ENCODE measurements at regions of chr6 and their contacts with region 1.

Region 1: GRCh38 chr6:107704347-107705013 is 119.6 kb downstream of the SCML4 start:
- DNase-seq: no peak
- ATAC-seq: peak in 2 of 4 donors; percentile 55 to 56
- H3K4me3 ChIP-seq: peak overlapping the region in 1 of 12 donors; percentile 19
- H3K27ac ChIP-seq: no peak overlapping the region
- H3K4me1 ChIP-seq: peaks cover 0 to 6% (median 0%) of the 10 kb centered on the region in 12 donors
- H3K27me3 ChIP-seq: no peaks in the 10 kb centered on the region
- CTCF ChIP-seq: peak; percentile 75 to 92 (median 84)
- POLR2A ChIP-seq: no peak

Region 2: GRCh38 chr6:107132330-107132954 is 572.0 kb before region 1 on chr6:
- intact Hi-C with region 1: loop called in 1 of 10 experiments (anchors 10 kb)
- DNase-seq: peak in 1 of 5 donors; percentile 30
- ATAC-seq: no peak
- H3K4me3 ChIP-seq: no peak overlapping the region
- H3K27ac ChIP-seq: no peak overlapping the region
- H3K4me1 ChIP-seq: peaks cover 0 to 10% (median 0%) of the 10 kb centered on the region in 12 donors
- H3K27me3 ChIP-seq: no peaks in the 10 kb centered on the region
- CTCF ChIP-seq: peak in 10 of 12 donors; percentile 15 to 55 (median 45)
- POLR2A ChIP-seq: no peak

Region 3: DNA sequence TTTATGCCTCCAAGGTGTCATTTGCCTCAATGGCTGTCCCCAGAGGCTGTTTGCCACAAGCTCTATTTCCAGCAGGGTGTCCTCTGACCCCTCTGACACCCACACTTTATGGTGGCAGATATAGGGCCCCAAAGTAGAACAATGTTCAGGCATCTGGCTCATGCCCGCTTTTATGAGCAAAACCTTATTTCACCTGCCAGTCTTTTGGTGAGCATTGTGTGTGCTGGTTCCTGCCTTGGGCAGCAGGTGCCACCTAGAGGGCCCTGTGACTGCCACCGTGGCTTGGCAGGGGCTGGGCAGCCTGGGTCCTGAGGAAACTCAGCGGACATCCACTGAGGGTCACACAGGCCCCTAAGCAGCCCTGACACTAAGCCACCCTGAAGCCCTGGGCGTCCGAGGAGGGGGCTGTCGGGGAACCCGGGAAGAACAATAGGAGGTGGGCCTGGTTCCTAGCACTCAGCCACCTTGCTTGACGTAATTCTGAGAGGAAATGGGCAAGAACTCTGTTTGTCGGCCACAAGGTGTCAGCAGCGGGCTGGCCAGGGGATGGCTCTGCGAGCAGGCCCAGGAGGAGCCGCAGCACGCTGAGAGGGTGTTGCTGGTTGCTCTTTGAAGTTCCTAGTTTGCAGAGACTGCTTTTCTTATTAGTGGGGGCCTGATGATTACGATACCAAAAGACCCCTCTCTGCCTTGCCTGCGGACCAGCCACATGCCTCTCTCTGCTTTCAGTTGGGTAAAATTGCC is 29.3 kb before region 1 on chr6:
- intact Hi-C with region 1: loop called in 2 of 10 experiments (anchors 1 to 2 kb)
- DNase-seq: peak; percentile 85 to 92 (median 87)
- ATAC-seq: peak; percentile 88 to 95 (median 94)
- H3K4me3 ChIP-seq: peak overlapping the region in 9 of 12 donors; percentile 7 to 46 (median 26)
- H3K27ac ChIP-seq: peak overlapping the region in 3 of 12 donors; percentile 16 to 57 (median 55)
- H3K4me1 ChIP-seq: peaks cover 0 to 32% (median 16%) of the 10 kb centered on the region in 12 donors
- H3K27me3 ChIP-seq: no peaks in the 10 kb centered on the region
- CTCF ChIP-seq: peak; percentile 83 to 95 (median 92)
- POLR2A ChIP-seq: no peak

Region 4: DNA sequence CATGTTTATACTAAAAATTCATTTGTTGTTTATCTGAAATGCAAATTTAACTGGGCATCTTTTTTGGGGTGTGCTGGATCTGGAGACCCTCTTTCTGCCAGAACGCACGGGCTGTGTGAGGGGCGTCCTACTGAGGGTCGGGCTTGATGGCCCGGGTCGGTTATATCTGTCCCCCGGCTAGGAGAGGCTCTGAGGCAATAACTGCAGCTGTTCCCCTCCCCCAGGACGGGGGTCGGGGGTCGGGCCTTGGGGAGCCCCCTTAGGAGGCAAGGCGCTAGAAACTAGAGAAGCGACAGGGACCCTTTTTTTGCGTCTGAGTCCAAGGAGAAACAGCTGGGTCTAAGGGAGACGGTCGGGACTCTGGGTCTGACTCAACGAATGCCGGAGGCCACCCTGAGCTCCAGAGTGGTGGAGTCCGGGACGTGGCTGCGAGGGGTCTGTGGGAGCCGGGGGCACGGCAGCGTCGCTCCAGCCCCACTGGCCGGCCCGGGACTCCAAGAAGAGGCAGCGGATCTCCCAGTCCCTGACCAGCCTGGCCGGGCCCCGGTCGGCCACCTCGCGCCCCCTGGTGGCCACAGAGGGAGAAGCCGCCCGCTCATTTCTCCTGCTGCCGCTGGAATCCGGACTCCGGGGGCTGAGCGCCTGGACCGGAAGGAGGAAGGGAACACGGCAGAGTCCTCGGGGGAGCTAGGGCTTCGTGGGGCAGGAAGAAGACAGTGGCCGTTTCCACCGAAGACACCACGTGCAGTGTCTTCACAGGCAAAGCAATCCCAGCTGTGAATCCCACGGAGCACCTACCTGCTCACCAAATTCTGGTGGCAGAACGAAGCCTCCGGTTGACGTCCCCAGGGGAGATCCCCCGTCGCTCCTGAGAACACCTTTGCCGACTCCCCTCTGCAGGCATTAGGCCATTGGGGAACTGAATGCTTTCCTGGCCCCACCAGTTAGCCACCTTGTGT is 143.6 kb after region 1 on chr6:
- intact Hi-C with region 1: loop called in 2 of 10 experiments (anchors 10 kb)
- DNase-seq: peak; percentile 81 to 94 (median 83)
- ATAC-seq: peak; percentile 83 to 98 (median 95)
- H3K4me3 ChIP-seq: peak overlapping the region in 11 of 12 donors; percentile 4 to 57 (median 43)
- H3K27ac ChIP-seq: no peak overlapping the region
- H3K4me1 ChIP-seq: peaks cover 0 to 11% (median 5%) of the 10 kb centered on the region in 12 donors
- H3K27me3 ChIP-seq: peaks cover 0 to 16% (median 6%) of the 10 kb centered on the region in 9 donors
- CTCF ChIP-seq: peak; percentile 93 to 98 (median 97)
- POLR2A ChIP-seq: no peak

Measured in heart left ventricle (tissue), 16 donors.